ENCODE measurements at regions of chr21 and their contacts with region 1.

Region 1: GRCh38 chr21:27564684-27565301 is 597.9 kb upstream of the ADAMTS5 start:
- DNase-seq: peak; percentile 68
- H3K4me3 ChIP-seq: no peak overlapping the region
- H3K27ac ChIP-seq: no peak overlapping the region
- H3K4me1 ChIP-seq: no peaks in the 10 kb centered on the region
- H3K27me3 ChIP-seq: no peaks in the 10 kb centered on the region
- CTCF ChIP-seq: peak; percentile 61 to 68
- POLR2A ChIP-seq: no peak

Region 2: GRCh38 chr21:26850108-26850643 is 714.6 kb before region 1 on chr21:
- CTCF ChIA-PET with region 1: interaction called, 11 read pairs
- POLR2A ChIA-PET with region 1: no interaction called
- dilution Hi-C with region 1: no loop called
- intact Hi-C with region 1: loop called (anchors 1 kb)
- DNase-seq: peak; percentile 75
- H3K4me3 ChIP-seq: no peak overlapping the region
- H3K27ac ChIP-seq: no peak overlapping the region
- H3K4me1 ChIP-seq: peaks cover 11% of the 10 kb centered on the region
- H3K27me3 ChIP-seq: peaks cover 5 to 16% of the 10 kb centered on the region in 2 experiments
- CTCF ChIP-seq: no peak
- POLR2A ChIP-seq: no peak

Region 3: DNA sequence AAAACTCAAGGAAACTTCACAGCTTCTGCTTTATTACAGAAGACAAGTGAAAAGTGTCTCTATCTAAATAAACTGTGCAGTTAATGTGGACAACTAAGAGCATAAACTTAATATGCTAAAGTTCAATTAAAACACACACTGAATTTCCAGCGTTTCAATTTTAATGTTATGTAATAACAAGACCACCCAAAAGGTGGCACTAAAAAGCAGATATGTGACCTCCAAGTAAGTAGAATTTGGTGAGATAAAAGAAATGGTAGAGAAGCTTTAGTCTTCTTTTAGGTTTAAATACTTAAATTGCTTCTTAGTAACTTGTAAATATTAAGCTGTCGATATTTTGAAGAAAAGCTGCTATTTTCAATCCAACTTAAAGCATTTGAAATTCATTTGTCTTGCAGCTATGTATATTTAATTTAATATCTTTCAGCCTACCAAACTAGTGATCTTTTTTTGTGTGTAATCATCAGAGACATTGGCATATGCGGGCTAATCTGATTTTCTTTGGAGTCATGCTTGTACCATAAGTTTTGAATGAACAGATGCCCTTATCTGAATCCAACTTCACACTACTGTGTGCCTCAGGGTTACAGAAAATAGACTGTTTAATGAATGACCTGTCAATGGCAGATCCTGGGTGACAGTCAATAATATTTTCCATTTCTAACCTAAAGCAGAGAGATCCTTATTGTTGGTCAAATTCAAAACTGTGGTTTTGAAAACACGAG is 683.1 kb before region 1 on chr21:
- CTCF ChIA-PET with region 1: interaction called, 115 read pairs
- POLR2A ChIA-PET with region 1: no interaction called
- dilution Hi-C with region 1: no loop called
- intact Hi-C with region 1: loop called (anchors 1 kb)
- DNase-seq: peak; percentile 39
- H3K4me3 ChIP-seq: no peak overlapping the region
- H3K27ac ChIP-seq: no peak overlapping the region
- H3K4me1 ChIP-seq: no peaks in the 10 kb centered on the region
- H3K27me3 ChIP-seq: no peaks in the 10 kb centered on the region
- CTCF ChIP-seq: peak in 1 of 2 donors; percentile 2
- POLR2A ChIP-seq: no peak

Region 4: GRCh38 chr21:26967062-26967913 is 597.5 kb before region 1 on chr21 and contains the start of gene ADAMTS5:
- CTCF ChIA-PET with region 1: no interaction called
- POLR2A ChIA-PET with region 1: no interaction called
- dilution Hi-C with region 1: no loop called
- intact Hi-C with region 1: loop called (anchors 5 kb)
- DNase-seq: peak; percentile 15
- H3K4me3 ChIP-seq: peak within 1 kb of the TSS; percentile 7 to 31 (median 15)
- H3K27ac ChIP-seq: no peak within 1 kb of the TSS
- H3K4me1 ChIP-seq: peaks cover 14% of the 10 kb centered on the region
- H3K27me3 ChIP-seq: peaks cover 23 to 46% of the 10 kb centered on the region in 2 experiments
- CTCF ChIP-seq: no peak
- POLR2A ChIP-seq: no peak
- total RNA-seq, gene ADAMTS5: not detected in 2 replicates

Region 5: GRCh38 chr21:27362249-27362648 is 202.5 kb before region 1 on chr21:
- CTCF ChIA-PET with region 1: interaction called, 25 read pairs
- POLR2A ChIA-PET with region 1: no interaction called
- dilution Hi-C with region 1: no loop called
- intact Hi-C with region 1: loop called (anchors 10 kb)
- DNase-seq: peak; percentile 23
- H3K4me3 ChIP-seq: no peak overlapping the region
- H3K27ac ChIP-seq: no peak overlapping the region
- H3K4me1 ChIP-seq: no peaks in the 10 kb centered on the region
- H3K27me3 ChIP-seq: no peaks in the 10 kb centered on the region
- CTCF ChIP-seq: no peak
- POLR2A ChIP-seq: no peak

Region 6: DNA sequence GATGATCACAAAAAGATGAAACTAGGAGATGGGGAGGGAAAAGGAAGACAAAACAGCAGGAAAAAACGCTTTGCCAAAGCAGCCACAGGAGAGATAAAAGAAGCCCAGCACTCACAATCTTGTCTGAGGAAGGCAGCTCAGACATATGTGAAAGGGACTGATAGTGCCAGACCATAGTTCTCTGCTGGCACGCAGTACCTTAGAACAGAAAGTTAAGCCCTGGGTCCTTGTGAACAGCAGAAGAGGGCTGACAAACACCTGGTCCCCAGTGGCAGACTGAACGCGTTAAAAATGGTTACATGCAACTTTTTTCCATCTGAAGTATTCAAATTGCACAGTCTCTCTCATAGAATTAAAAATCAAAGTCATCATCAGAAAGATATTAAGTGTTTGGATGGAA is 164.7 kb before region 1 on chr21:
- CTCF ChIA-PET with region 1: no interaction called
- POLR2A ChIA-PET with region 1: no interaction called
- dilution Hi-C with region 1: no loop called
- intact Hi-C with region 1: no loop called
- DNase-seq: no peak
- H3K4me3 ChIP-seq: no peak overlapping the region
- H3K27ac ChIP-seq: no peak overlapping the region
- H3K4me1 ChIP-seq: no peaks in the 10 kb centered on the region
- H3K27me3 ChIP-seq: no peaks in the 10 kb centered on the region
- CTCF ChIP-seq: no peak
- POLR2A ChIP-seq: no peak

Region 7: GRCh38 chr21:27545754-27546349 is 18.9 kb before region 1 on chr21:
- CTCF ChIA-PET with region 1: no interaction called
- POLR2A ChIA-PET with region 1: no interaction called
- dilution Hi-C with region 1: no loop called
- intact Hi-C with region 1: no loop called
- DNase-seq: no peak
- H3K4me3 ChIP-seq: no peak overlapping the region
- H3K27ac ChIP-seq: no peak overlapping the region
- H3K4me1 ChIP-seq: no peaks in the 10 kb centered on the region
- H3K27me3 ChIP-seq: peaks cover 0 to 3% of the 10 kb centered on the region in 2 experiments
- CTCF ChIP-seq: no peak
- POLR2A ChIP-seq: no peak

Region 8: GRCh38 chr21:27606422-27606821 is 41.6 kb after region 1 on chr21:
- CTCF ChIA-PET with region 1: no interaction called
- POLR2A ChIA-PET with region 1: no interaction called
- dilution Hi-C with region 1: no loop called
- intact Hi-C with region 1: no loop called
- DNase-seq: no peak
- H3K4me3 ChIP-seq: no peak overlapping the region
- H3K27ac ChIP-seq: no peak overlapping the region
- H3K4me1 ChIP-seq: no peaks in the 10 kb centered on the region
- H3K27me3 ChIP-seq: no peaks in the 10 kb centered on the region
- CTCF ChIP-seq: no peak
- POLR2A ChIP-seq: no peak